Activated naive CD4-positive, alpha-beta T cell treated with anti-CD3 and anti-CD28 coated beads for 36 hours (primary cell): ENCODE measurements at regions of chr22 and their contacts with region 1.

Region 1: DNA sequence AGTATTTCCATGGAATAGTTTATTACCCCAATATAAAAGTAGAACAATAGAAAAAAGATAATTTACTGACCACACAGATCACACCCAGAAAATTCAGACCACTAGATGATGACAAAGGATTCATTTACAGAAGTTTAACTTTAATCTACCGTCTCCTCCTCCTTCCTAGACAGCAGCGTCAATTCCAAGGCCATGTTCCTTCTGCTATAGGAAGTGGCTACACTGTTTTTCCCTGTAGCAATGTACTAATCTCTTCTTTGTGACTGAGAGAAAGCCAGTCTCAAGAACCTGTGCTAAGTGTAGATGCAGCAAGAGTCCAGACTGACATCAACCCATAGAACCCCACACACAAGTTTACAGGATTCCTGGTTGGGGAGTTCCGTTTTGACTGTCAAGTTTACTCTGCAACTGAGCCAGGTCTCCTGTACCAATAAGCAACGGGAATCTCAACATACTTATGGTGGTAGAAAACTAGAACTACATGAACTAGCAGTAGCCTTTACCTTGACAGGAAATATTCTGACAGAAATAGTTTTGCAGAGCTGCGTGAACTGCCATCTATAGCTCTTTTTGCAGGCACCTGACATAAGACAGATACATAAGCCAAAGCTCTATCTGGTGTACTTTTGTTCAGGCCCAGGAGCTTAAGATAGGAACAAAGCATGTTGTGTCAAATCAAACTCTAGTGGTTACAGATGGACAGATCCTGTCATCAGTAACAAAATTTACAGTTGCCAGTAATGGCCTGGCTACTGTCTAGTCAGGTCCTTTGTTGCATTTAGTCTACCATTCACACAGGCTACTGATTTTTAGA is 42.9 kb downstream of the MRTFA start:
- DNase-seq: no peak
- H3K4me3 Mint-ChIP-seq: no peak overlapping the region
- H3K27ac Mint-ChIP-seq: peak overlapping the region; percentile 72
- H3K4me1 Mint-ChIP-seq: peaks cover 48% of the 10 kb centered on the region
- H3K27me3 Mint-ChIP-seq: no peaks in the 10 kb centered on the region

Region 2: GRCh38 chr22:40578171-40578570 is 15.5 kb before region 1 on chr22:
- CTCF ChIA-PET with region 1: interaction called, 3 read pairs
- intact Hi-C with region 1: loop called (anchors 1 kb)
- DNase-seq: peak; percentile 74
- H3K4me3 Mint-ChIP-seq: peak overlapping the region; percentile 34
- H3K27ac Mint-ChIP-seq: peak overlapping the region; percentile 92
- H3K4me1 Mint-ChIP-seq: peaks cover 23% of the 10 kb centered on the region
- H3K27me3 Mint-ChIP-seq: no peaks in the 10 kb centered on the region

Region 3: GRCh38 chr22:40583053-40583741 is 10.5 kb before region 1 on chr22:
- CTCF ChIA-PET with region 1: interaction called, 3 read pairs
- intact Hi-C with region 1: loop called (anchors 1 kb)
- DNase-seq: peak; percentile 49
- H3K4me3 Mint-ChIP-seq: no peak overlapping the region
- H3K27ac Mint-ChIP-seq: peak overlapping the region; percentile 34
- H3K4me1 Mint-ChIP-seq: peaks cover 42% of the 10 kb centered on the region
- H3K27me3 Mint-ChIP-seq: no peaks in the 10 kb centered on the region

Region 4: DNA sequence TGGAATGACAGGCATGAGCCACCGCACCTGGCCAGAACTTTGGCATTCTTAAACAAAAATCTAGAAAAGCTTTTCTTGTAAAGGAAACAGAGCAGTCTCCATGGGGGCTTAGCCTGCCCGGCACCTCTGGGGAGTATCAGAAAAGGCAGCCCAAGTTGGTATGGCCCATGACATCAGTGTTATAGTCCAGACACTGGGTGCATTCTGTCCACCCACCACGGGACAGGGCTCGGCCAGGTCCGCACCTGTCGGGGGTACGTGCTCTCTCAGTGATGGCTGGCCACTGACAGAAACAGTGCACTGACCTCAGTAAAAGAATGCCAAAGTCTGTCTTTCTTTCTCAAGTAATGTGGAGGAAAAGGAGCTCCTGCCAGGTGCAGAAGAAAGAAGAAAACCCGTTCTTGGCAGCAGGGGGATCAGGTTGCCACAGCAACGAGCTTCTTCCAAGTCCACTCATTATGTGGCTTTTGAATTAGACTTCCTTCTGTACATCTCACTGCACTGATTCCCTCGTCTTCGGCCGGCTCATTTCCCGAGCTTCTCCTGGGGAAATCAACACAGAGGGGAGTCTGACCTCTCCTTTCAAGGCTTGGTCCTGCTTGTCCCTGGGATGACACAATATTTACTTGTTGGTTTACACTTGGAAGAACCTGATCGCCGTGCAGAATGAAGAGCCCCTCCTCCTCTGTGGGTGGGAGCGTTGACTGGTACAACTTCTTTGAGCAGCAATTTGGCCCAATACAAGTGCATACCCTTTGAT is 120.7 kb after region 1 on chr22:
- CTCF ChIA-PET with region 1: no interaction called
- intact Hi-C with region 1: no loop called
- DNase-seq: no peak
- H3K4me3 Mint-ChIP-seq: no peak overlapping the region
- H3K27ac Mint-ChIP-seq: no peak overlapping the region
- H3K4me1 Mint-ChIP-seq: peaks cover 29% of the 10 kb centered on the region
- H3K27me3 Mint-ChIP-seq: no peaks in the 10 kb centered on the region